ENCODE measurements at regions of chr13 and their contacts with region 1.

Region 1: GRCh38 chr13:102580552-102581169 is 16.1 kb upstream of the TPP2 start:
- DNase-seq: peak in 1 of 2 donors; percentile 86
- H3K4me3 ChIP-seq: no peak overlapping the region
- H3K27ac ChIP-seq: no peak overlapping the region
- H3K4me1 ChIP-seq: peaks cover 0 to 6% (median 1%) of the 10 kb centered on the region in 4 donors
- H3K27me3 ChIP-seq: peaks cover 0 to 13% (median 4%) of the 10 kb centered on the region in 3 donors
- CTCF ChIP-seq: peak in 5 of 7 experiments; percentile 55 to 70 (median 61)
- EP300 ChIP-seq: no peak
- POLR2A ChIP-seq: no peak

Region 2: GRCh38 chr13:102845630-102846260 is 265.1 kb after region 1 on chr13 and contains the start of gene ERCC5:
- intact Hi-C with region 1: loop called (anchors 10 kb)
- DNase-seq: peak; percentile 96 to 98
- H3K4me3 ChIP-seq: peak within 1 kb of the TSS; percentile 83 to 97 (median 89)
- H3K27ac ChIP-seq: peak within 1 kb of the TSS; percentile 97 to 100 (median 98)
- H3K4me1 ChIP-seq: peaks cover 7 to 48% (median 28%) of the 10 kb centered on the region in 4 donors
- H3K27me3 ChIP-seq: no peaks in the 10 kb centered on the region
- CTCF ChIP-seq: no peak
- EP300 ChIP-seq: no peak
- POLR2A ChIP-seq: peak in 1 of 4 donors; percentile 60
- total RNA-seq, gene ERCC5: 42.9 to 348 (median 105) TPM

Region 3: GRCh38 chr13:103517066-103517767 is 936.6 kb after region 1 on chr13:
- intact Hi-C with region 1: no loop called
- DNase-seq: peak in 1 of 2 donors; percentile 39
- H3K4me3 ChIP-seq: no peak overlapping the region
- H3K27ac ChIP-seq: no peak overlapping the region
- H3K4me1 ChIP-seq: no peaks in the 10 kb centered on the region
- H3K27me3 ChIP-seq: no peaks in the 10 kb centered on the region
- CTCF ChIP-seq: no peak
- EP300 ChIP-seq: no peak
- POLR2A ChIP-seq: no peak

Measured in stomach (tissue), 19 donors.